Activated naive CD4-positive, alpha-beta T cell treated with anti-CD3 and anti-CD28 coated beads for 36 hours (primary cell): ENCODE measurements at regions of chr16 and their contacts with region 1.

Region 1: DNA sequence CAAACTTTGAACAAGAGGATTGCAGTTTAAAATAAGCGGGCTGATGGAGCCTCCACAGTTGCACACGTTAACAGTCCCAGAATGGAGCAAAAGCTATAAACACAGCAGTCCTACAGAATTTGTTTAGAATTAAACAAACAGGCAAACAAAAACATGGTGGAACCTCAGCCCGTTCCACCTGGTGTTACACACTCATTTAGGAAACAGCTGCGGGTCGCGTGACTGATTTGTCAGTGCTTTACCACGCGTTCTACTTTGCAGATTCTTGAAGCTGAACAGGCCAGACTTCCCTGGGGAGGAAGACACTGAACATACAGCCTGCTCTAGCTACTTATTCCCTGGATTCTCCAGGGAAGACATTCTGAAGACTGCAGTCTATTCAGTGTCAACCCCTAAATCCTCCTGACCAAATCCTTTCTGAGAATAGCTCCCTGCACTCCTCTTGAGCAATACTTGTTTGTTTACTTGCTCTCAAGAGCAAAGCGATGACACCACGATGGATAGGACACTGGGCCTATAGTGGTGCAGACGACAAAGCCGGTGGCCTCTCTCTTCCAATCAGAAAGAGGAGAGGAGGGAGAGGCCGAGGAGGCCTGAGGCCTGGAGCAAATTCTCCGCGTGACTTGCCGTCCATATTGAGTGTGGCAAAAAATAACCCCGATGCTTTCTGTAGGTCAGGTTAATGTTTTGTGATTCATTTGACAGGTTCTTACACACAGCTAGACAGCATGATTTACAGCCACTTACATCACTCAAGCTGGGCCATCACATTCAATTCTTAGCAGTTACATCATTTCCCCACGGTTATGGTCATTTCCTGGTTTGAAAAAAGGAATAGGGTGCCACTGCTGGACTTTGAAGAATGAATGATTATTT is 4.0 kb upstream of the MAP1LC3B start:
- DNase-seq: peak; percentile 94
- H3K4me3 Mint-ChIP-seq: peak overlapping the region; percentile 49
- H3K27ac Mint-ChIP-seq: peak overlapping the region; percentile 93
- H3K4me1 Mint-ChIP-seq: peaks cover 39% of the 10 kb centered on the region
- H3K27me3 Mint-ChIP-seq: peaks cover 2% of the 10 kb centered on the region

Region 2: DNA sequence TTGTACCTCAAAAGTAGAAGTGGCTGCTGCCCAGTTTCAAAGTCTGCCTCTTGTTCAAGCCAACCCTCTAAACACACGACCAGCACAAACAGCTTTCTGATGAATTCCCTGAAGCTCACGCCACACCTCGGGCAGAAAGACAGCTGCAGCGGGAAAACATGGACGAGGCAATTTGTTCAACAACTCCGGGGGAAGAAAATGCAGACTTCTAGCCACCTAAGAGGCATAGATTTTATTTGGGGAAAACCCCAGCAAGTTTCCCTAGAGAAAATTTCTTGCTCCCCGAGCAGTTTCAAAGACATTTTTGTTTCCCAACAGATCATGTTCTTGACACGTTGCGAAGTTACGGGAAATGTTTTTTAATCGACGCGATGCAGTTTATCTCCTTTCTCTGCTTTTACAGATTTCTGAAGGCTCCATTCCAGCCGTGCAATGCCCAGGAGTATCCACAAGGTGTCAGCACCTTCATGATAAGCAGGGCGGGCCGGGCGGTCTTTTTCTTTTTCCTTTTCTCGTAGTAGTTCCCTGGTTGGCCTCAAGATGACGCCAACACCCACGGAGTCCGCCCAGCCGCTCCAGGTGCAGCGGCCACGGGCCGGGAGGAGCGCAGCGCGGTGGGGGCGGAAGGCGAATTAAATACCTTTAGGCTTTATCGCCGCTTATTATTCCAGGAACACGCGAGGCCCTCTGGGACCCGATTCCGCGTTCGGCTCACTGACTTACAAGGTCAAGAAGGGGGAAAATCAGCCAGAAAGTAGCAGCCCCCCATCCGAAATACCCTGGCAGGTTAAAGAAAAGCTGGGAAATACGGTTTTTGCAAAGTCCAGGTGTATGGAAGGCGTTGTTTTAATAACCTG is 824.5 kb before region 1 on chr16:
- CTCF ChIA-PET with region 1: no interaction called
- intact Hi-C with region 1: loop called (anchors 5 kb)
- DNase-seq: peak; percentile 95
- H3K4me3 Mint-ChIP-seq: no peak overlapping the region
- H3K27ac Mint-ChIP-seq: no peak overlapping the region
- H3K4me1 Mint-ChIP-seq: peaks cover 21% of the 10 kb centered on the region
- H3K27me3 Mint-ChIP-seq: peaks cover 55% of the 10 kb centered on the region

Region 3: DNA sequence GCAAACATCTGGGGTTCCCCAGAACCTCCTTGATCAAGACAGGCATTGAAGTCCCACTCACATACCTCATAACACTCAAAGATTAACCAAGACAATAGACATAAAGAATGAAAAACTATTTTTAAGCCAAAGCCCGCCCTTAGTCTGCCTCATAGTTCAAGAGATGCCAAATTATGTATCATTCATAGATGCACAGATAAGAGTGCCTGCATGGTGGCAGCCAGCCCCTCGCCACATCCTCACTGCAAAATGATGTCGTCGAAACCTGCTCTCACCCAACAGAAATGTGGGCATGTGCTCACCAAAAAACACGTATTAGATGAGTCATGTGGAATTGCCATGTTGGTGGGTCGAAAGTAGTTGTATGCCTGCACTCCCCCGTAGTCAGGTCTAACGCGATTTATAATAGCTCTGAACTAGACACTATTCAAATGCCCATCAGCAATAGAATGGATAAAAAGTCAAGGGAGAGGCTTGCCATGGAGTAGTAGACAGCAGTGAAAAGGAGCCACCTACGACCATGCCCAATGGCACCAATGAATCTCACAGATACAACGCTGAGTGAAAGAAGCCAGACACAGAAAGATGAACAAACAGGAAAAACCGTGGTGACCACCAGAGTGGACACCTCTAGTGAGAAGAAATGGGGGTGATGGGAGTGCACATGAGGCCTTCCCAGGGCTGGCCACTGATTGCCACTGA is 135.8 kb before region 1 on chr16:
- CTCF ChIA-PET with region 1: no interaction called
- intact Hi-C with region 1: no loop called
- DNase-seq: no peak
- H3K4me3 Mint-ChIP-seq: no peak overlapping the region
- H3K27ac Mint-ChIP-seq: no peak overlapping the region
- H3K4me1 Mint-ChIP-seq: peaks cover 3% of the 10 kb centered on the region
- H3K27me3 Mint-ChIP-seq: no peaks in the 10 kb centered on the region

Region 4: GRCh38 chr16:87435372-87436224 is 47.4 kb after region 1 on chr16:
- CTCF ChIA-PET with region 1: interaction called, 9 read pairs
- intact Hi-C with region 1: loop called (anchors 2 kb)
- DNase-seq: peak; percentile 29
- H3K4me3 Mint-ChIP-seq: peak overlapping the region; percentile 54
- H3K27ac Mint-ChIP-seq: peak overlapping the region; percentile 86
- H3K4me1 Mint-ChIP-seq: peaks cover 32% of the 10 kb centered on the region
- H3K27me3 Mint-ChIP-seq: no peaks in the 10 kb centered on the region

Region 5: GRCh38 chr16:87492721-87493607 is 104.8 kb after region 1 on chr16 and contains the start of gene ZCCHC14:
- CTCF ChIA-PET with region 1: no interaction called
- intact Hi-C with region 1: loop called (anchors 1 kb)
- DNase-seq: peak; percentile 100
- H3K4me3 Mint-ChIP-seq: peak within 1 kb of the TSS; percentile 76
- H3K27ac Mint-ChIP-seq: peak within 1 kb of the TSS; percentile 78
- H3K4me1 Mint-ChIP-seq: peaks cover 48% of the 10 kb centered on the region
- H3K27me3 Mint-ChIP-seq: no peaks in the 10 kb centered on the region
- total RNA-seq, gene ZCCHC14: 12.4 to 13.9 TPM

Region 6: GRCh38 chr16:87765776-87766484 is 377.8 kb after region 1 on chr16 and contains the start of gene KLHDC4:
- CTCF ChIA-PET with region 1: no interaction called
- intact Hi-C with region 1: loop called (anchors 2 kb)
- DNase-seq: peak; percentile 93
- H3K4me3 Mint-ChIP-seq: peak within 1 kb of the TSS; percentile 100
- H3K27ac Mint-ChIP-seq: peak within 1 kb of the TSS; percentile 96
- H3K4me1 Mint-ChIP-seq: peaks cover 43% of the 10 kb centered on the region
- H3K27me3 Mint-ChIP-seq: no peaks in the 10 kb centered on the region
- total RNA-seq, gene KLHDC4: 56.2 to 62.4 TPM

Region 7: DNA sequence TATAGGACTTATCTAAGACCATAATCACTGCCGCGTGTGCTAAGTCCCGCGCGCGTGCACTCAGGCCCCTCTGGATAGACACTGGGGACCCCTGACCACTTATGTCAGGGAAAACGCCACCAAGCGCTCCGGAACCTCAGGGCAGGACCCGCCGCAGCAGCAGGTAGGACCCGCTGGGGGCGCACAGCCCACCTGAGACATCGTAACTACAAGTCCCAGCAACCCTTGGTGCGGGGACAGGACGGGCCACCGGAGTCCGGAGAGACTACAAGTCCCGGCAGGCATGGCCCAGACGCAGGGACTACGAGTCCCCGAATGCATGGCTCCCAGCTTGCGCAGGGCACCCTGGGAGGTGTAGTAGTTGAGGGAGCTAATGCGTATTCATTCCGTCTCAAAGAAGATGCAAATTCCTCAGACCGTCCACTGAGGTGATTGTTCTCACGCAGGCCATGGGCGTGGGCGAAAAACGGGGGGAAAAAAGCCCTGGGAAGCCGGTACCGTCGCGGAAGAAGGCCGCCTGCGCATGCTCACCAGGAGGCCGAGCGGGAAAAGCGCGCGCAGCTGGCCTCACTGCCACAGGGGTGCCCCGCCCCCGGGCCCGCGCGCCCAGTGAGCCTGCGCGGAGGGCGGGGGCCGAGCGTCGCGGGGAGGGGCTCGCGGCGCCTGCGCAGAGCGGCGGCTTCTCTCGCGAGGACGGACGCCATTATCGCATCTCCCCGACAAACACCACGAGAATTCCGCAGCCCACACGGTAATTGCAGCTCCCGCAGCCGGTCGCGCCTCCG is 562.8 kb after region 1 on chr16 and contains the start of gene BANP:
- CTCF ChIA-PET with region 1: no interaction called
- intact Hi-C with region 1: loop called (anchors 2 kb)
- DNase-seq: peak; percentile 98
- H3K4me3 Mint-ChIP-seq: peak within 1 kb of the TSS; percentile 85
- H3K27ac Mint-ChIP-seq: peak within 1 kb of the TSS; percentile 99
- H3K4me1 Mint-ChIP-seq: peaks cover 41% of the 10 kb centered on the region
- H3K27me3 Mint-ChIP-seq: no peaks in the 10 kb centered on the region
- total RNA-seq, gene BANP: 35.1 to 38.6 TPM